ENCODE measurements at regions of chr1 and their contacts with region 1.

Region 1: DNA sequence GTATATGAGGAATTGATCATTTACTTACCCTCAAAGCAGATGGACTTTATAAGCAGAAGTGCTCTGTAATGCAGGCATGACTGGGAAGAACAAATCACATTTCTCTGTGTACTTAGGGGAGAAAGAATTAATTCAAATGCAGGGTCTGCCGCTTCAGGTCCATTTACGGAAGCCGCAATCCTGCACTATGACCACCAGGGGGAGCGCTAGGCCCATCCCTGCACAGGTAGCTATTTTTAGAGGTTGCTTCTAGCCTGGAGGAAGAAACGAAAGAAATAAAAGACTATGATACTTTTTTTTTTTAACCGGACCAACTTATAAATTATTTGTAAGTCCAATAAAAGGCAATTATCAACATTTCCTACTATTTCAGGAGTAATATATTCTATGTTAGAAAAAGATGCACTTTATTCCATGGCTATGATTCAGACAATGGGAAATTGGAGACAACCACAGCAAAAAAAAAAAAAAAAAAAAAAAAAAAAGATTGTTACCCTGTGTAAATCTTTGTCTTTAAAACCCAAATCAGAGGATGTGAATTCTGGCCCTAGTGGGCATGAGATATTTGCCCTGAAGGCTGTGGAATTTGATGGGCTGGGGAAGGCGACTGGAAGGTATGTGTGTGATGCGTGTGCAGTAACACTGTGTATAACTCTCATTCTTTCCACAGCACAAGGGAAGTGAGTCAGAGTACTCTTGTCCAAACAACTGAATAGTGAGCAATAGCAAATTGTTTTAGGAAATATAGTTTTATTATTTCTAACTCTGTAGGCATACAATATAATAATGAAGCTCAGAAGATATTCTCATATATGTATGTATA is 12.9 kb upstream of the FYB2 start:
- DNase-seq: peak; percentile 60 to 61
- H3K4me3 ChIP-seq: no peak overlapping the region
- H3K27ac ChIP-seq: no peak overlapping the region
- H3K4me1 ChIP-seq: no peaks in the 10 kb centered on the region
- H3K27me3 ChIP-seq: peaks cover 59% of the 10 kb centered on the region
- CTCF ChIP-seq: peak; percentile 98

Region 2: GRCh38 chr1:56967900-56968832 is 136.1 kb after region 1 on chr1:
- CTCF ChIA-PET with region 1: no interaction called
- POLR2A ChIA-PET with region 1: no interaction called
- intact Hi-C with region 1: loop called (anchors 2 kb)
- DNase-seq: peak in 1 of 2 experiments; percentile 16
- H3K4me3 ChIP-seq: no peak overlapping the region
- H3K27ac ChIP-seq: no peak overlapping the region
- H3K4me1 ChIP-seq: no peaks in the 10 kb centered on the region
- H3K27me3 ChIP-seq: peaks cover 35% of the 10 kb centered on the region
- CTCF ChIP-seq: peak; percentile 69

Region 3: DNA sequence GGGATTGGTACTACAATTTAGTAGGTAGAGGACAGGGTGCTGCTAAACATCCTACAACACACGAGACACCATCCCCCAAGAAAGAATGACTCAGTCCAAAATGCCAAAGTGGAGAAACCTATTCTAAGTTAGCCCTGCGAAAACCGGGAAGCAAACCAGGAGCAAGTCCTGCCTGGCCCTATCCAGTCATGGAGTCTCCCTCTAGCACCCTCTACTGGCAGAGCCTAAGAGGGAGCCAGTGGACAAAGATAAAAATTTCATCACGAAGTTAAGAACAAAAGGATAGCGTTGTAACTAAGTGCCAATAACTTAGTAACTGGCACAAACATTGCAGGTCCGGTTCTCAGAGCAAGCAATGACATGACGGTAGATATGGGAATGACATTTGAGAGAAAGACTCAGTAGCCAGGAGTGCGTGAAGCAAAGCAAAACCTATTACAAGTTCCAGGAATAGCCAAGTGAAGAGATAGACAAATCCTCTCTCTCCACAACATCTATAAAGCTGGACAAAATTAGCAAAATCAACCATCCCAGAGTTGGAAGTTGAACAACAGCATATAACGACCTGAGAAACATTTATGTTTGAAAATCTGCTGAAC is 1331.0 kb after region 1 on chr1:
- CTCF ChIA-PET with region 1: no interaction called
- POLR2A ChIA-PET with region 1: no interaction called
- intact Hi-C with region 1: loop called (anchors 1 kb)
- DNase-seq: peak; percentile 33 to 38
- H3K4me3 ChIP-seq: no peak overlapping the region
- H3K27ac ChIP-seq: no peak overlapping the region
- H3K4me1 ChIP-seq: no peaks in the 10 kb centered on the region
- H3K27me3 ChIP-seq: no peaks in the 10 kb centered on the region
- CTCF ChIP-seq: peak; percentile 74

Region 4: DNA sequence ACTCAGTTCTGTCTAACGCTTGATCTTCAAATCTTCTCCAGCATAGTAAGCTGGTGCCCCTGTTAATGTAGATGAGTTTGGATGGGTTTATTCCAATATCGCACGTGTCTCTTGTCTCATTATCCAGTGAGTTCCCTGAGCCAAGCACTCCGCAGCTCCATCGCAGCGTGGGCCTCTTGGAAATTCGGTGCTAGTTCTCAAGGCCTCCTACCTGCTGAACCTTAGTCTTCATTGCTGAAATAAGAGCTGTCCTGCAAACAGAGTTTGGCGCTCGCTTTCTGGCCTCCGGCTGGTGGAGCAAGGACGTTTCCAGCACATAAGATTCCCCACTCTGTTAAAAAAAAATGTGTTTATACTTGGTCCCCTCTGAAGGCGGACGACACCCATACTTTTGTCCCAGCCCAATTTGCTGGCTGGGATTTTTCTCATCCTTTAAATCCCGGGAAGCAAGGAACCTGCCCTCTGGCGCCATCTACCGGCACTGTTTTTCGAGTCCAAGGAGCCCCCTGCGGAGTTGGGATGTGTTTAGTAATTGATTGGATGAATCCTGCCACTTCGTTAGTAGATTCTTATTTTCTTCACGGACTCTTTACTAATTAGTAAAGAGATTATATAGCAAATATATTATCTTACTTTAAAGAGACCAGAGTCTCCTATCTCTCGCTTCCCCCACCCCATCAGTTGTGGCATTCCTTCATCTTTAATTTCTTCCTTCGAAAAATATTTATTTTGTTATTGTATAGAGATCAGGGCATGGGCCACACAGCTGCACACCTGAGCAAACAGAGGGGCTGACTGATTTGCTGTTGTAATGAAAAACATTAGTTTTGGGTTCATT is 1937.1 kb after region 1 on chr1:
- CTCF ChIA-PET with region 1: no interaction called
- POLR2A ChIA-PET with region 1: no interaction called
- intact Hi-C with region 1: loop called (anchors 10 kb)
- DNase-seq: peak in 1 of 2 experiments; percentile 68
- H3K4me3 ChIP-seq: no peak overlapping the region
- H3K27ac ChIP-seq: no peak overlapping the region
- H3K4me1 ChIP-seq: peaks cover 24% of the 10 kb centered on the region
- H3K27me3 ChIP-seq: no peaks in the 10 kb centered on the region
- CTCF ChIP-seq: peak; percentile 87